ENCODE measurements at regions of chr11 and their contacts with region 1.

Region 1: GRCh38 chr11:69962152-69962551 is 116.0 kb upstream of the ANO1 start:
- DNase-seq: no peak
- H3K4me3 ChIP-seq: no peak overlapping the region
- CTCF ChIP-seq: no peak

Region 2: DNA sequence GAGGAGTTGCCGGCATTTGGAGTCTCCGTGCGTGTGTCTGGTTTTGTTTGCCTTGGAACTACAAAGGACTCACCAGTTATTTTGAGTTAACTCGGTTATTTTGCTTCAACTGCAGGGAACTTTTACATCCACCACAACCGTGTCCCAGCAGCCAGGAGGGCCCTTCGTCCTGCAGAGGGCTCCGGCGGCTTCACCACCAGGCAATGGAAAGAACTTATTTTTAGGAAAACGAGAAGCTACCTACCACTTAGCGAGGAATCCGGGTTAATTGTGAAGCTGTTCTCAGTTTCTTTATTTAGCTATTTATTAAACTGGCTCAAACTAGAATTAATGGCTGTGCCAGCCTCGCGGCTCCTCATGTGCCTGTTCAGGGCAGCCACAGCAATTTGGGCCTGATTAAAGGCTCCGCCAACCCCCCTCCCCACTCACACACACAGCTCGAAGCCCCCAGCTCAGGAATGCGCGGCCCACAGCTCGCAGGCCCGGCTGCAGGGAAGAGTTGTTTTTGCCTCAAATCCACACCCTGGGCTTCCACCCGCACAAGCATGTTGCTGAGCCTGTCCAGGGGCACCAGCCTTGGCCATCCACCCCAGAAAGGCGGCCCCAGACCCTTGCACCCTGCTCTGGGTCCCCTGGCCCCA is 87.0 kb before region 1 on chr11:
- in situ Hi-C with region 1: loop called (anchors 5 kb)
- DNase-seq: no peak
- H3K4me3 ChIP-seq: no peak overlapping the region
- CTCF ChIP-seq: no peak

Region 3: GRCh38 chr11:70020336-70021214 is 58.4 kb after region 1 on chr11:
- in situ Hi-C with region 1: loop called (anchors 5 kb)
- DNase-seq: no peak
- H3K4me3 ChIP-seq: no peak overlapping the region
- CTCF ChIP-seq: no peak

Region 4: GRCh38 chr11:70034740-70035365 is 72.7 kb after region 1 on chr11:
- in situ Hi-C with region 1: no loop called
- DNase-seq: no peak
- H3K4me3 ChIP-seq: no peak overlapping the region
- CTCF ChIP-seq: no peak